Naive thymus-derived CD4-positive, alpha-beta T cell (primary cell): ENCODE measurements at regions of chr5 and their contacts with region 1.

Region 1: GRCh38 chr5:55994574-55995333 is at the start of gene IL6ST:
- DNase-seq: peak; percentile 93 to 99 (median 95)
- ATAC-seq: peak; percentile 96
- H3K4me3 ChIP-seq: peak within 1 kb of the TSS; percentile 94
- H3K4me3 Mint-ChIP-seq: peak within 1 kb of the TSS; percentile 88 to 99 (median 96)
- H3K27ac ChIP-seq: peak within 1 kb of the TSS; percentile 99
- H3K27ac Mint-ChIP-seq: peak within 1 kb of the TSS; percentile 95 to 100 (median 98)
- H3K4me1 ChIP-seq: peaks cover 10 to 12% of the 10 kb centered on the region in 2 donors
- H3K4me1 Mint-ChIP-seq: peaks cover 28 to 59% (median 50%) of the 10 kb centered on the region in 7 donors
- H3K27me3 ChIP-seq: no peaks in the 10 kb centered on the region
- H3K27me3 Mint-ChIP-seq: no peaks in the 10 kb centered on the region
- total RNA-seq, gene IL6ST: 101 to 372 (median 346) TPM

Region 2: GRCh38 chr5:56012281-56012963 is 17.7 kb after region 1 on chr5:
- CTCF ChIA-PET with region 1: interaction called, 6 read pairs
- POLR2A ChIA-PET with region 1: interaction called, 56 read pairs
- intact Hi-C with region 1: loop called (anchors 1 kb)
- DNase-seq: peak in 7 of 9 donors; percentile 51 to 84 (median 75)
- ATAC-seq: peak; percentile 91
- H3K4me3 ChIP-seq: no peak overlapping the region
- H3K4me3 Mint-ChIP-seq: peak overlapping the region; percentile 13 to 84 (median 66)
- H3K27ac ChIP-seq: peak overlapping the region; percentile 57
- H3K27ac Mint-ChIP-seq: peak overlapping the region; percentile 71 to 96 (median 89)
- H3K4me1 ChIP-seq: peaks cover 26% of the 10 kb centered on the region in 2 donors
- H3K4me1 Mint-ChIP-seq: peaks cover 26 to 52% (median 49%) of the 10 kb centered on the region in 7 donors
- H3K27me3 ChIP-seq: no peaks in the 10 kb centered on the region
- H3K27me3 Mint-ChIP-seq: no peaks in the 10 kb centered on the region

Region 3: GRCh38 chr5:56056875-56057274 is 62.1 kb after region 1 on chr5:
- CTCF ChIA-PET with region 1: interaction called, 9 read pairs
- POLR2A ChIA-PET with region 1: interaction called, 97 read pairs
- intact Hi-C with region 1: loop called (anchors 1 to 2 kb)
- DNase-seq: no peak
- ATAC-seq: no peak
- H3K4me3 ChIP-seq: peak overlapping the region; percentile 21
- H3K4me3 Mint-ChIP-seq: peak overlapping the region in 8 of 10 donors; percentile 55 to 83 (median 68)
- H3K27ac ChIP-seq: peak overlapping the region; percentile 60
- H3K27ac Mint-ChIP-seq: peak overlapping the region; percentile 44 to 99 (median 90)
- H3K4me1 ChIP-seq: peaks cover 8 to 96% of the 10 kb centered on the region in 2 donors
- H3K4me1 Mint-ChIP-seq: peaks cover 52 to 94% (median 76%) of the 10 kb centered on the region in 7 donors
- H3K27me3 ChIP-seq: no peaks in the 10 kb centered on the region
- H3K27me3 Mint-ChIP-seq: peaks cover 0 to 6% (median 0%) of the 10 kb centered on the region in 5 donors

Region 4: DNA sequence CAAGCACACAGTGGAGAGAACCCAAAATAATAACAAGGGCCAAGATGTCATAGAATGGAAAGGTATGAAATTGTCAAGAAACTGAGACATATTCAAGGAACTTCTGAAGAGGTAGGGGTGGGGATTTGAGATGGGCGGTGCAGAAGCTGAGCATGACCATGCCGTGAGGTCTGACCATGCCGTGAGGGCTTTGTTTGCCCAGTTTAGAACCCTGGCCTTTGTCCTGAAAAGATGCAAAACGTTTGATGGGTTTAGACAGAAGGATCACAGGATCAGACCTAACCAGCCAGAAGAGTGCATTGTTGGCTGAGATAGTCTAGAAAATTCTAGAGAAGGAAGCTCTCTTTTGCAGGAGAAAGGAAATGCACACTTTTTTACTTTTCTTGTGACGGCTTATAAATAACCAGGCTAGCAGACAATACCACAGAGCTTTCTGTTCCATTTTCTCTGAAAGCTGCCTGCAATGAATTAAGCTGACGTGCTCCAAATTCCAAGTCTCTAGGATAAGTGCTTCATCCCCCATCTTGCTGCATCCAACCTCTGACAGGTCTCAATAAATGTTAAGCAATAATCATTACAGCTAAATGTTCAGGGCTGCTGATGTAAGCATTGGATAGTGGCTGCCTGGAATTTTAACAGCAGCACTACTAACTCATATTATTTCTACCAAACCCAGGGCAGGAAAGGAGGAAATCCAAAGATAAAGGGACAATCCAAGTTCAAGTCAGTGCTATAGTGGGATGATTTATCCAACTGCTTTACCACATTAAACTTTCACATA is 110.9 kb after region 1 on chr5:
- CTCF ChIA-PET with region 1: interaction called, 5 read pairs
- POLR2A ChIA-PET with region 1: interaction called, 41 read pairs
- intact Hi-C with region 1: loop called in 1 of 2 experiments (anchors 1 kb)
- DNase-seq: peak in 2 of 9 donors; percentile 24 to 44
- ATAC-seq: no peak
- H3K4me3 ChIP-seq: no peak overlapping the region
- H3K4me3 Mint-ChIP-seq: peak overlapping the region; percentile 49 to 85 (median 70)
- H3K27ac ChIP-seq: peak overlapping the region; percentile 56
- H3K27ac Mint-ChIP-seq: peak overlapping the region; percentile 70 to 100 (median 90)
- H3K4me1 ChIP-seq: peaks cover 0 to 60% of the 10 kb centered on the region in 2 donors
- H3K4me1 Mint-ChIP-seq: peaks cover 33 to 95% (median 73%) of the 10 kb centered on the region in 7 donors
- H3K27me3 ChIP-seq: no peaks in the 10 kb centered on the region
- H3K27me3 Mint-ChIP-seq: no peaks in the 10 kb centered on the region

Region 5: DNA sequence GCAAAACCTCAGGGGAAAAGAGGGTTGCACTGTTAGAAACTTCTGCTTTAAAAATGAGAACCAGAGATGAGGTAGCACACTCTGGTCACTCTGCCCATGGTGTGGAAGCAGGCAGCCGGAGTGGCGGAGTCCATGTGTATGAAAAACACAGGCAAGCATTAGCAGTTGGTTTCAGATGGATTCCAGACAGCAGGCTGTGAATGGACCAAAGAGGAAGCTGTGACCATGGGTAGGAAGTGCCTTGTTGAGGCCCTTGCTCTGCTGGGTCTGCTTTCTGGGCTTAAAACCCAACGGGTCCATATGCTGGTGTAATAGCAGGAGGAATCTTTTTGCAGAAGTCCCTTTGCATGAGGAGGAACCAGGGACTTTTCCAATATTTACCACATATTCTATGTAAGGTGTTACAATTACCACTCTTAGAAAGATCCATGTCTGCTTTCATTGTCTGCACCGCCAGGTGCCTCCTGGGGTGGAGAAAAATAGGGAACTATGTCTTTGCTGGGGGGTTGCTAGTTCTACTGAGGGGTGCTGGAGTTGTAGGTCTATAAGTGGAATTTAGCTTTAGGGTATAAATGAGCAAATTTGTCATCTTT is 161.3 kb after region 1 on chr5:
- CTCF ChIA-PET with region 1: no interaction called
- POLR2A ChIA-PET with region 1: interaction called, 37 read pairs
- intact Hi-C with region 1: loop called in 1 of 2 experiments (anchors 2 kb)
- DNase-seq: no peak
- ATAC-seq: peak; percentile 48
- H3K4me3 ChIP-seq: no peak overlapping the region
- H3K4me3 Mint-ChIP-seq: peak overlapping the region; percentile 25 to 96 (median 94)
- H3K27ac ChIP-seq: peak overlapping the region; percentile 61
- H3K27ac Mint-ChIP-seq: peak overlapping the region; percentile 87 to 98 (median 95)
- H3K4me1 ChIP-seq: peaks cover 11 to 71% of the 10 kb centered on the region in 2 donors
- H3K4me1 Mint-ChIP-seq: peaks cover 60 to 89% (median 79%) of the 10 kb centered on the region in 7 donors
- H3K27me3 ChIP-seq: peaks cover 0 to 2% of the 10 kb centered on the region in 2 donors
- H3K27me3 Mint-ChIP-seq: no peaks in the 10 kb centered on the region